Body of pancreas (tissue), 4 donors: ENCODE measurements at regions of chr20 and their contacts with region 1.

Region 1: DNA sequence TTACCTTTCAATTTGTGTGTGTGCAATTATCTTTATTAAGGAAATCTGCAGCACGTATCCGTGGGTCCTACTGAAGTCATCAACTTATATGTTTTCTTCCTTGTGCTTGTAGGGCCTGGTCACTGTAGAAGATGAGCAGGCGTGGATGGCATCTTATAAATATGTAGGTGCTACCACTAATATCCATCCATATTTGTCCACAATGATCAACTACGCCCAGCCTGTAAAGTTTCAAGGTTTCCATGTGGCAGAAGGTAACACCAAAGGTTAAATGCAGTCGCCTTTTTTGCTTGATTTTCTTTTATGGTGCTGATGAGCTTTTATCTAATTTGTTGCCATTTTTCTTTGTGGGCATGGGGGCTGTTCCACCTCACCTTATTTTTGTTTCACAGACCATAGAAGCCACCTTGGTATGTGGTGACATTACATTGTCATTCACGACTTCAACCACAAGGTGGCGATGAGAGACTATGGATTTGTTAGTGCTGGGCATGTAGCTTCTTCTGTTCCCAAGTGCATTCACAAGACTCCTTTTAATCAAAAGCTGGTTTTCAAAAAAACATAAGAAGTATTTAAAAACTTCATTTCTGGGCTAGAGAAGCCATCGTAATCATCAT is 106.5 kb upstream of the LAMP5 start:
- DNase-seq: peak; percentile 73 to 78 (median 76)
- ATAC-seq: peak; percentile 83
- H3K4me3 ChIP-seq: no peak overlapping the region
- H3K27ac ChIP-seq: no peak overlapping the region
- H3K4me1 ChIP-seq: no peaks in the 10 kb centered on the region
- H3K27me3 ChIP-seq: no peaks in the 10 kb centered on the region
- CTCF ChIP-seq: peak; percentile 41 to 94 (median 85)
- POLR2A ChIP-seq: no peak

Region 2: GRCh38 chr20:9609887-9610502 is 202.1 kb after region 1 on chr20:
- intact Hi-C with region 1: loop called (anchors 5 kb)
- DNase-seq: peak; percentile 64 to 73 (median 72)
- ATAC-seq: peak; percentile 48
- H3K4me3 ChIP-seq: no peak overlapping the region
- H3K27ac ChIP-seq: no peak overlapping the region
- H3K4me1 ChIP-seq: no peaks in the 10 kb centered on the region
- H3K27me3 ChIP-seq: no peaks in the 10 kb centered on the region
- CTCF ChIP-seq: peak; percentile 49 to 83 (median 73)
- POLR2A ChIP-seq: no peak